ENCODE measurements at regions of chr2 and their contacts with region 1.

Region 1: DNA sequence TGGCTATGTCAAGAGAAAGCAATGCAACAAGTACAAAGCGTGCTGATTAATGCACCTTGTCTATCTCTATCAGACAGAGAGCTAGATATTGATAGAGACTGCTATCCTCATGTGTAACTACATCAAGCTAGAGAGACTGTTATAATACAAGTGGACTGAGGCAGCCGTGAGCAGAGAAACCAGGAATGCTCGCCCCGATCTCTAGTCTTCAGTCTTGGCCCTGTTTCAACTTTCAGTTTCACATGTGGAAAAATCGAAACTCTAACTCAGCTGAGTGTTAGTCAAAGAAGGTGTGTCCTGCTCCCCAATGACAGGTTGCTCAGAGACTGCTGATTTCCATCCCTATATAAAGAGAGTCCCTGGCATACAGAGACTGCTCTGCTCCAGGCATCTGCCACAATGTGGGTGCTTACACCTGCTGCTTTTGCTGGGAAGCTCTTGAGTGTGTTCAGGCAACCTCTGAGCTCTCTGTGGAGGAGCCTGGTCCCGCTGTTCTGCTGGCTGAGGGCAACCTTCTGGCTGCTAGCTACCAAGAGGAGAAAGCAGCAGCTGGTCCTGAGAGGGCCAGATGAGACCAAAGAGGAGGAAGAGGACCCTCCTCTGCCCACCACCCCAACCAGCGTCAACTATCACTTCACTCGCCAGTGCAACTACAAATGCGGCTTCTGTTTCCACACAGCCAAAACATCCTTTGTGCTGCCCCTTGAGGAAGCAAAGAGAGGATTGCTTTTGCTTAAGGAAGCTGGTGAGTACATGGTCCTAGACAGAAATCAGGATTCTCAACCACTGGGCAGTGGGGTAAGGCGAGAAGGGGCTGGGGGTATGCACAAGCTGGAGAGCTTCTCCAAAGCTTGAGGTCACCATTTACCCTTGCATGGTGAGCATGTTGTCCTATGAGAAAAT is at the start of gene RSAD2:
- DNase-seq: peak; percentile 52 to 61 (median 56)
- H3K4me3 ChIP-seq: peak within 1 kb of the TSS; percentile 52 to 67
- H3K4me3 Mint-ChIP-seq: peak within 1 kb of the TSS; percentile 85 to 93 (median 90)
- H3K27ac ChIP-seq: peak within 1 kb of the TSS; percentile 59
- H3K27ac Mint-ChIP-seq: peak within 1 kb of the TSS; percentile 82 to 93 (median 90)
- H3K4me1 ChIP-seq: peaks cover 54% of the 10 kb centered on the region
- H3K4me1 Mint-ChIP-seq: peaks cover 41 to 57% (median 46%) of the 10 kb centered on the region in 4 donors
- H3K27me3 ChIP-seq: no peaks in the 10 kb centered on the region
- H3K27me3 Mint-ChIP-seq: no peaks in the 10 kb centered on the region
- total RNA-seq, gene RSAD2: 3.8 to 4.9 TPM

Region 2: GRCh38 chr2:6841537-6842287 is 35.9 kb before region 1 on chr2:
- CTCF ChIA-PET with region 1: no interaction called
- POLR2A ChIA-PET with region 1: no interaction called
- intact Hi-C with region 1: no loop called
- DNase-seq: no peak
- H3K4me3 ChIP-seq: no peak overlapping the region
- H3K4me3 Mint-ChIP-seq: no peak overlapping the region
- H3K27ac ChIP-seq: no peak overlapping the region
- H3K27ac Mint-ChIP-seq: no peak overlapping the region
- H3K4me1 ChIP-seq: no peaks in the 10 kb centered on the region
- H3K4me1 Mint-ChIP-seq: no peaks in the 10 kb centered on the region
- H3K27me3 ChIP-seq: no peaks in the 10 kb centered on the region
- H3K27me3 Mint-ChIP-seq: no peaks in the 10 kb centered on the region

Region 3: DNA sequence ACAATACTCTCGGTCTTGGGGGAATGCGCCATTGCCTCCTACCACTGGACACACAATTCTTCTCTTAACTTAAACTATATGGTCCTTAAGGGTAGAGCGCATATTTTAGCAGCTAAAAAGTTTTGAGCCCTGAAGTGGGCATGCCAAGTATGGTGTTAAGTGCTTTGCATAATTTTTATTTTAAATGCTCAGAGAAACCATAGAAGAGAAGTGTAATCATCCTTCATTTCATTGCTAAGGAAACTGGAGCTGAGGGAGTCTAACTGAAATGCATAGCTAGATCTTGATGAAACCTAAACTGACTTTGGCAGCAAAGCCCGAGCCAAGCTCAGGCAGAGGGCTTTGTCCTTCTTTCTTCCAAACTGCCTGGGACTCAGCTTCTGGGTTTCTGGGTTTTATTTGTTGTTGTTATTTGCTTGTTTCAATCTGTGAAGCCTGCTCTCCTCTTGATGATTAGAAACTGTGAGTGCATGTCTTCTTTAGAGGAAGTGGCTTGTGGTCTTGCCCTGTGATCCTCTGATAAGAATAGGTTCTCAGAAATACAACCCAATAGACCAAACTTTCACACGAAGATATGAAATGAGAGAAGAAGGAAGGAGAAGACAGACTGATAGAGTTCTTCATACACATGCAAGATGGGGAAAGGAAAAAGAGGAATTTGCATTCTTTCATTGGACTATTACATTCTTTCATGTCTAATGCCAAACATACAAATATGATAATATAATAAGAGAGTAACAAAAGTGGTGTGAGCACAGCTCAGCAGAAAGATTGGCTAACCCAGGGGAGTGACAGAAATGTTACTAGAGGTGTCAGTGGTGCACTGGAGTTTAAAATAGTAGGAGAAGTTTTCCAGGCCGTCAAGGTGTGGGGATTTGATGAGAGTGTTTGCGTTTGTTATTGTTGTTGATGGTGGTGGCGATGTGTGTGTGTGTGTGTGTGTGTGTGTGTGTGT is 32.1 kb after region 1 on chr2:
- CTCF ChIA-PET with region 1: interaction called, 7 read pairs
- POLR2A ChIA-PET with region 1: interaction called, 33 read pairs
- intact Hi-C with region 1: loop called (anchors 1 kb)
- DNase-seq: peak; percentile 73 to 81 (median 75)
- H3K4me3 ChIP-seq: peak overlapping the region in 1 of 2 donors; percentile 40
- H3K4me3 Mint-ChIP-seq: peak overlapping the region; percentile 63 to 88 (median 78)
- H3K27ac ChIP-seq: peak overlapping the region; percentile 4
- H3K27ac Mint-ChIP-seq: peak overlapping the region; percentile 76 to 98 (median 93)
- H3K4me1 ChIP-seq: peaks cover 86% of the 10 kb centered on the region
- H3K4me1 Mint-ChIP-seq: peaks cover 72 to 91% (median 78%) of the 10 kb centered on the region in 4 donors
- H3K27me3 ChIP-seq: no peaks in the 10 kb centered on the region
- H3K27me3 Mint-ChIP-seq: no peaks in the 10 kb centered on the region

Region 4: DNA sequence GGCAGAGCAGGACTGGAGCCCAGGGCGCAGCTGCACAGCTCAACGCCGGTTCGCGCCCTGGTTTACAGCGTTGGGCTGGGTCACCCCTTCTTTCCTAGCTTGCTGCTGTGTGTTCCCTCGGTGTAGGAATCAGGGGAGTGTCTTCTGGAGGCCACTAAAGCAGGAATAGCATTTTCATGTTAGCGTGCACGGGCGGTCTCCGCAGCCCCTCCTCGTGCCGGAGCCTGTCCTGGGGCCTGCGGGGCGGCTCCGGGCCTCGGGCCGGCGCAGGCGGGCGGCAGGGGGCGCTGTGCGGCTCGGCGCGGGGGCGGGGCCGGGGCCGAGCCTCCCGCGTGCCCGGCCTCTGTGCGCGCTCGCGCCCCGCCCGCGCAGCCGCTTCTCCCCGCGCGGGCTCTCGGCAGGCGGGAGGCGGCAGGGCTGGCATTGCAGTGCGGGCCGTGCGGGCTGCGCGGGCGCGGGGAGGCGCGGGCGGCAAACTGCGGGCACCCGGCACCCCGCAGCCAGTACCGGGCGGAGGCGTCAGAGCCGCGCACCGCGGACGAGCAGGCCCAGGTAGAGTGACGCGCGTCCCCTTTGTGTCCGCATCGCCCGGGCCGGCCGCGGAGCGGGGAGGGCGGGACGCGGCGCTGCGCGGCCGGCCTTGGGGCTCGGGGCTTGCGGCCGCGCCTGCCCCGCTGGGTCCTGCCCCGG is 39.6 kb after region 1 on chr2 and contains the start of gene RNF144A:
- CTCF ChIA-PET with region 1: interaction called, 24 read pairs
- POLR2A ChIA-PET with region 1: interaction called, 33 read pairs
- intact Hi-C with region 1: no loop called
- DNase-seq: peak; percentile 64 to 83 (median 76)
- H3K4me3 ChIP-seq: peak within 1 kb of the TSS; percentile 44 to 47
- H3K4me3 Mint-ChIP-seq: peak within 1 kb of the TSS; percentile 72 to 84 (median 78)
- H3K27ac ChIP-seq: peak within 1 kb of the TSS; percentile 43
- H3K27ac Mint-ChIP-seq: peak within 1 kb of the TSS in 5 of 7 donors; percentile 57 to 88 (median 74)
- H3K4me1 ChIP-seq: peaks cover 68% of the 10 kb centered on the region
- H3K4me1 Mint-ChIP-seq: peaks cover 46 to 79% (median 60%) of the 10 kb centered on the region in 4 donors
- H3K27me3 ChIP-seq: no peaks in the 10 kb centered on the region
- H3K27me3 Mint-ChIP-seq: no peaks in the 10 kb centered on the region
- total RNA-seq, gene RNF144A: 34.3 to 41.1 TPM

Measured in CD4-positive, alpha-beta memory T cell (primary cell).